AG04450 (cell line): ENCODE measurements at regions of chr9 and their contacts with region 1.

Region 1: GRCh38 chr9:113622600-113623400 is 159.3 kb downstream of the RGS3 start:
- DNase-seq: no peak
- H3K4me3 ChIP-seq: no peak overlapping the region
- H3K27ac ChIP-seq: peak overlapping the region; percentile 71
- H3K27me3 ChIP-seq: no peaks in the 10 kb centered on the region
- CTCF ChIP-seq: no peak

Region 2: DNA sequence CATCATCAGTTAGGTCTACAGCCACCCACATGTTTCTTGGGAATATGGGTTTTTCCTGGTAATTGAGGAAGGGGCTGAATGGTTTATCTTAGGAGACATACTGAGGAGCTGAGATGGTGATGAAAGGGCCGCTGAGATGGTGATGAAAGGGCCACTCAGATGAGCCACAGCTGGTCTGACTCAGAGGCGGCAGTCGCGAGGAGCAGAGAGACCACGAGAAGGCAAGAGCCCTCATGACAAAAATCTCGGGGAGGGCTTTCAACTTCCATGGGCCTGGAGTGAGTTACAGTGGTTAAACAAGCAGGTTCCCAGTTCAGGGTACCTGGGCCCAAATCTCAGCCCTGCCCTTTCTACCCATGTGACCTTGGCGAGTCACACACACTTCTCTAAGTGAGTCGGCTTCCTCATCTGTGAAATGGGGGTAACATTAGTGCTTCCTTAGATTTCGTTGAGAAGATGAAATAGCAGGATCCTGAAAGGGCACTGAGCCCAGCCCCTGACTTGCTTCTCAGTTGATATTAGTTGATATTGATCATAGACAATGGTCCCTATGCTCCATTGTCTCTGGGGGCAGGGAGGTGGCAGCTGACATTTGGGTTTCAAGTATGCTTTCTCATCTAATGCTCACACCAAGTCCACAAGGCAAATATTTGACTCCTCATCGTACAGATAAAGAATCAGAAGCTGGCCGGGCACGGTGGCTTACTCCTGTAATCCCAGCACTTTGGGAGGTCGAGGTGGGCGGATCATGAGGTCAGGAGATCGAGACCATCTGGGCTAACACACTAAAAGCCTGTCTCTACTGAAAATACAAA is 10.2 kb after region 1 on chr9:
- CTCF ChIA-PET with region 1: no interaction called
- POLR2A ChIA-PET with region 1: interaction called, 11 read pairs
- DNase-seq: no peak
- H3K4me3 ChIP-seq: no peak overlapping the region
- H3K27ac ChIP-seq: no peak overlapping the region
- H3K27me3 ChIP-seq: no peaks in the 10 kb centered on the region
- CTCF ChIP-seq: no peak